Left ventricle myocardium inferior (tissue), 1 donor: ENCODE measurements at regions of chr17 and their contacts with region 1.

Region 1: GRCh38 chr17:41801374-41802271 is 10.1 kb downstream of the P3H4 start:
- DNase-seq: peak; percentile 84
- H3K4me3 ChIP-seq: peak overlapping the region; percentile 38
- H3K27ac ChIP-seq: peak overlapping the region; percentile 45
- H3K4me1 ChIP-seq: peaks cover 12% of the 10 kb centered on the region
- H3K27me3 ChIP-seq: no peaks in the 10 kb centered on the region
- CTCF ChIP-seq: peak; percentile 98

Region 2: DNA sequence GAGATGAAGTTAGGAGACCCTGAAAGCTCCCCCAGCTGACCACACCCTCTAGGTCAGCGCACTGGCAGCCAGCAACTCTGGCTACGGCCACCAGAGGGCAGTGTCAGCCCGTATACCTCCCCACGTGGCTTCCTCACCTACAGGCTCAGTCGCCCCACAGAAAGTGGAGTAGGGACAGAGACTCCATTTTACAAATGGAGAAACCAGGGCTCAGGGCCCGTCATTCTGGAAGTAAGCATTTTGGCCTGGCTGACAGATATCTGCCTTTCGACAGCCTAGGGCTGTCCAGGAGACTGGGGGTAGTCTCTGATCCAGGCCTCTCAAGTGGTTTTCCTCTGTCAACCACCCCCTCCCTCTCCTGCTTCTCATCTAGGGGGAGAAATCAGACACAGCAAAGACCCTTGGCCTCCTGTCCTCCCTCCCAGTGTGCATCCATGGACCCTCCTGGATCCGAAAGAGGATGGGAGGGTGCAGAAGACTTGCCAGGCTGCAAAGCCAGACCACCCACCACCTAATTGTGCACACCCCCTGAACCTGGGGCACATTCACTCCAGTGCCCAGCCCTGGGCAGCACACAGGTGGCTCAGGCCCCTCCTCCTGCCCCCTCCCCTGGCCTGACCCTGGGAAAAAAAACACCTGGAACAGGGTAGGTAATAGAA is 63.4 kb before region 1 on chr17:
- intact Hi-C with region 1: loop called (anchors 2 kb)
- DNase-seq: peak; percentile 77
- H3K4me3 ChIP-seq: no peak overlapping the region
- H3K27ac ChIP-seq: no peak overlapping the region
- H3K4me1 ChIP-seq: peaks cover 27% of the 10 kb centered on the region
- H3K27me3 ChIP-seq: peaks cover 47% of the 10 kb centered on the region
- CTCF ChIP-seq: peak; percentile 99